ENCODE measurements at regions of chr3 and their contacts with region 1.

Region 1: GRCh38 chr3:18575573-18575972 is 150.4 kb upstream of the SATB1 start:
- DNase-seq: no peak
- CTCF ChIP-seq: no peak

Region 2: GRCh38 chr3:18295171-18295920 is 280.2 kb before region 1 on chr3:
- in situ Hi-C with region 1: no loop called
- DNase-seq: peak; percentile 18
- CTCF ChIP-seq: peak; percentile 82

Region 3: GRCh38 chr3:18740631-18741583 is 165.3 kb after region 1 on chr3:
- in situ Hi-C with region 1: loop called (anchors 10 kb)
- DNase-seq: peak; percentile 5
- CTCF ChIP-seq: no peak

Measured in GM13977 (cell line).